Activated T-helper 1 cell treated with anti-CD3 and anti-CD28 coated beads, Interleukin-12 subunit alpha, Interleukin-12 subunit beta, Interleukin-2, Interleukin-4 antibody, amounts not matched to agents 30 ng/mL and 10 ng/mL and 1 ng/mL, durations not matched to agents 14 hours and 24 hours and 36 hours (primary cell): ENCODE measurements at regions of chr1 and their contacts with region 1.

Region 1: DNA sequence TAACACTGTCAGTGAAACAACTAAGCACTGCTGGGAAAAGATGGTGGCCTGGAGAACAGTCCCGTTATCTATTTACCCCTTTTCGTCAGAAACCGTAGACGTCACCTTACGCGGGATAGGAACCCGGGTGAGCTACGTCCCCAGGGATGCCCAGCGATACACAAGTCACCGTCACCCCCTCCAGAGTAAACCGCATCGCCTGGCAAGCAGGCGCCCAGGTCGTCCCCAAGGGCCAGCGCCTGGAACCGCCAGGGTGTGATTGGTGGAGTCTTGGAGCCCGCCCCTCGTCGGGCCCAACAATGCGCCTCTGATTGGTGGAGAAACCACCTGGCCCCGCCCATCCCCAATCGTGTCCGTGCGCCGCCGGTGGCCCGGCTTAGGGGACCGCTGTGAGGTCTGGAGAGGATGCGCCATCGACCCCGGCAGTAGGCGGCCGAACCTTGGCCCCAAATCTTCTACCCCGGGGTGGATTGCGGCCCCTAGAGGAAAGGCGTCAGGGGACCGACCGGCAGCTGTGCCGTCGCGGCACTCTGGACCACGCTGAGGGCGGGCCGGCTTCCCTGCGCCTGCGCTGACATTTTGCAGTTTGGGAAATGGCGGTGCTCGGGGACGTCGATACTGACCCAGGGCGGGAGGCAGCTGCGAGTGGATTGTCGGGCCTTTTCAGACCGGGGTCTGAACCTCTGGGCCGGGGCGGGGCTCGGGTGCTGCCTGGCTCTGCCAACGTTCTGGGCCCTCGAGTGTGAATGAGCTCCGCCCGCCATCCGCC is 34.4 kb downstream of the SLC2A1 start:
- DNase-seq: peak; percentile 91
- H3K4me3 Mint-ChIP-seq: peak overlapping the region; percentile 90
- H3K27ac Mint-ChIP-seq: peak overlapping the region; percentile 96
- H3K4me1 Mint-ChIP-seq: peaks cover 50% of the 10 kb centered on the region
- H3K27me3 Mint-ChIP-seq: no peaks in the 10 kb centered on the region

Region 2: DNA sequence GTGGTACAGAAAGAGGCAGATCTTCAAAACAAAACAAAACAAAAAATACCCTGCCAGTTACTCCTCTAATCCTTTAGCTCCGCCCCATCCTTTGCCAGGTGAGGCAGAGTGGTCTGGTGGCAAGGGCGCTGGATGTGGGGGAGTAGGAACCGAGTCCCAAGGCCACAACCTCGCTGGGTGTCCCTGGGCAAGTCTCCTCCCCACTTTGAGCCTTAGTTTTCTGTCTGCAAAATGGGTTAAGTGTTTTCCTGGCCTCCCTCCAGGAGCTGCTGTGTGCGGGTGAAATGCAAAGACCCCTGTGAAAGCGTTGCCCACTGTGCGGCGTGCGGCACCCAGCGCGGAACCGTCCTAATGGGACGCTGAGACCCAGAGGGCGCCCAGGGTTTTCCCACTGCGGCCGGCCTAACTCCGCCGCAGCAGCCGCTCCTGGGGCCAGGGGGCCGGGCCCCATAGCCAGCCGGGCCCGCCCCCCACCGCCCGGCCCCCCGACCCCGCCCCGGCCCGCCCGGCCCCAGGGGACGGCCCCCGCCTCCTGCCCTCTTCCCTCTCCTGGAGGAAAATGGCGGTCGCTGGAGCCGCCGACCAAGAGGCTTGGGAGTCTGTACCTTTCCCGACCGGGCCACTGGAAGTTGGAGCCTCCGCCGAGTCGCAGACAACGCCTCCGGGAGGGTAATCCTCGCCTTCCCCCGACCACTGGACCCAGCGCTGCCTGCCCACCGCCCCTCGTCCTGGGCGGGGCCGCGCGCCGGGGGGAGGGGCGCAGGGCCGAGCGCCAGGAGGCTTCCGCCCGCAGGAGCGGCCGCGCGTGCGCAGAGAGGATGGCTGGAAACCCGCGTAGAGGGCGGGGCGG is 107.5 kb before region 1 on chr1 and contains the starts of genes ERMAP and SVBP:
- intact Hi-C with region 1: loop called (anchors 2 kb)
- DNase-seq: peak; percentile 90
- H3K4me3 Mint-ChIP-seq: peak within 1 kb of the TSS; percentile 79
- H3K27ac Mint-ChIP-seq: peak within 1 kb of the TSS; percentile 80
- H3K4me1 Mint-ChIP-seq: peaks cover 19% of the 10 kb centered on the region
- H3K27me3 Mint-ChIP-seq: no peaks in the 10 kb centered on the region
- total RNA-seq, gene ERMAP: 3.4 and 3.7 TPM in 2 replicates
- total RNA-seq, gene SVBP: 6.4 and 8.2 TPM in 2 replicates

Region 3: GRCh38 chr1:42838482-42839190 is 85.6 kb before region 1 on chr1:
- intact Hi-C with region 1: no loop called
- DNase-seq: no peak
- H3K4me3 Mint-ChIP-seq: no peak overlapping the region
- H3K27ac Mint-ChIP-seq: no peak overlapping the region
- H3K4me1 Mint-ChIP-seq: no peaks in the 10 kb centered on the region
- H3K27me3 Mint-ChIP-seq: no peaks in the 10 kb centered on the region

Region 4: GRCh38 chr1:42913426-42914091 is 10.7 kb before region 1 on chr1:
- intact Hi-C with region 1: loop called (anchors 1 kb)
- DNase-seq: peak; percentile 49
- H3K4me3 Mint-ChIP-seq: no peak overlapping the region
- H3K27ac Mint-ChIP-seq: no peak overlapping the region
- H3K4me1 Mint-ChIP-seq: peaks cover 7% of the 10 kb centered on the region
- H3K27me3 Mint-ChIP-seq: peaks cover 4% of the 10 kb centered on the region

Region 5: DNA sequence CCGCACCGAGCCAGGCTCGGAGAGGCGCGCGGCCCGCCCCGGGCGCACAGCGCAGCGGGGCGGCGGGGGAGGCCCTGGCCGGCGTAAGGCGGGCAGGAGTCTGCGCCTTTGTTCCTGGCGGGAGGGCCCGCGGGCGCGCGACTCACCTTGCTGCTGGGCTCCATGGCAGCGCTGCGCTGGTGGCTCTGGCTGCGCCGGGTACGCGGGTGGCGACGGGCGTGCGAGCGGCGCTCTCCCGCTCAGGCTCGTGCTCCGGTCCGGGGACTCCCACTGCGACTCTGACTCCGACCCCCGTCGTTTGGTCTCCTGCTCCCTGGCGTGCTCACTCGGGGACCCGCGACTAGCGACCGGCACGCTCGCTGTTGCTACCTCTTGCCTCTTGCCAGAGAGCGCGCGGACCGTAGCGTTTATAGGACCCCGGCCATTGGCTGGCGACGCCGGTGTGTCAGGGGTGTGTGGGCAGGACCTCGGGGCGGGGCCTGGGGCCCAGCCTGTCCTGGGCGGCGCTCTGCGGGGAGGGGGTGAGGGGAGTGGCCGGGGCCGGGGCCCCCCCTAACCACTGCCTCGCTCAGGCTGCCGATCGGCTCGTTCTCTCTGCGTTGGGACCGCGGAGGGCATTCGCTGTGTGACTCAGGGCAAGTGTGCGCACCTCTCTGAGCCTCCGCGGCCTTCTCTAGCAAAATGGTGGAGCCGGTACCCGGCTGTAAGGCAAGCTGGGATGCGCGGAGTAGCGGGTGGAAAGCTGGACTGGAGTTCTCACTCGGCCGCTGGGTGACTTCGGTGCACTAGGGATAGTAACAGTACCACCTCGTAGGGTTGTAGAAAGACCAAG is 34.4 kb after region 1 on chr1 and contains the start of gene SLC2A1:
- intact Hi-C with region 1: loop called (anchors 1 kb)
- DNase-seq: peak; percentile 93
- H3K4me3 Mint-ChIP-seq: peak within 1 kb of the TSS; percentile 97
- H3K27ac Mint-ChIP-seq: peak within 1 kb of the TSS; percentile 100
- H3K4me1 Mint-ChIP-seq: peaks cover 51% of the 10 kb centered on the region
- H3K27me3 Mint-ChIP-seq: peaks cover 6% of the 10 kb centered on the region
- total RNA-seq, gene SLC2A1: 111 and 120 TPM in 2 replicates